H1 (cell line): ENCODE measurements at regions of chr1 and their contacts with region 1.

Region 1: DNA sequence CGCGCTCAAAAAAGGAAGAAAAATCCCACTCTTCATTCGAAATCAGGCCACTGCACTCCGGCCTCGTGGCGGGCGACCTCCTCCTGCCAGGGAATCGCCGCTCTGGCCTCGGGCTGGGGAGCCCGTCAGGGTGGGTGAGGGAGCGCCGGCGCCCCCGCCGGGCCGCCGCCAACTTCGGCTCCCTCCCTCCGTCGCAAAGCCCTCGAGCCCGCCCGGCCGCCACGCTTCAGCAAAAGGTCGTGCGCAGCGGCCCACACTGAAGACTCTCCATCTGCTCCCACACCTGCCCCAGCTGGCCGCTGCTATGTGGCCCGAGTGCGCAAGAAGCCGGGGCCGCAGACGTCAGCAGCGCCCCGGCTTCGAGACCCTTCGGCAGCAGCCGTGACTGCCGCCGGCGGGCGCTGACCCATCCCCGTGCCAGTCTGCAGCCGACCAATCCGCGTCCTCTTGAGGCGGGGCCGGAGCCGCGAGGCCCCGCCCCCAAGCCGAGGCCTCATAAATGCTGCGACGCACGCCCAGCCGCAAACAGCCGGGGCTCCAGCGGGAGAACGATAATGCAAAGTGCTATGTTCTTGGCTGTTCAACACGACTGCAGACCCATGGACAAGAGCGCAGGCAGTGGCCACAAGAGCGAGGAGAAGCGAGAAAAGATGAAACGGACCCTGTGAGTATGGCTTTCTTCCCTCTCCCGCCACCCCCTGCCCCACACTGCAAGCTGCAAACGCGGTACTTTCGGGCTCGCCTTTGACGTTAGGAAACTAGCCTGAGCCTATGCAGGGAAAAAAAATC is at the start of gene RGS2:
- DNase-seq: peak; percentile 85 to 92
- H3K4me3 ChIP-seq: peak within 1 kb of the TSS; percentile 70 to 90 (median 82)
- H3K27ac ChIP-seq: peak within 1 kb of the TSS; percentile 61
- H3K4me1 ChIP-seq: peaks cover 0 to 7% (median 3%) of the 10 kb centered on the region in 4 experiments; a peak in 3 of 7 replicates
- H3K27me3 ChIP-seq: no peaks in the 10 kb centered on the region; a peak in 3 of 7 replicates
- CTCF ChIP-seq: peak in 1 of 3 experiments; percentile 3; a peak in 1 of 4 replicates
- EP300 ChIP-seq: no peak
- POLR2A ChIP-seq: peak; percentile 97 to 99
- RAD21 ChIP-seq: no peak; a peak in 1 of 4 replicates
- total RNA-seq, gene RGS2: 16.6 and 17.0 TPM in 2 replicates

Region 2: GRCh38 chr1:192797891-192798290 is 10.8 kb before region 1 on chr1:
- CTCF ChIA-PET with region 1: interaction called, 27 read pairs
- POLR2A ChIA-PET with region 1: interaction called, 17 read pairs
- DNase-seq: no peak
- H3K4me3 ChIP-seq: no peak overlapping the region
- H3K27ac ChIP-seq: no peak overlapping the region
- H3K4me1 ChIP-seq: peaks cover 3 to 10% (median 5%) of the 10 kb centered on the region in 4 experiments; a peak in 4 of 7 replicates
- H3K27me3 ChIP-seq: no peaks in the 10 kb centered on the region
- CTCF ChIP-seq: no peak
- EP300 ChIP-seq: no peak
- POLR2A ChIP-seq: no peak
- RAD21 ChIP-seq: no peak

Region 3: DNA sequence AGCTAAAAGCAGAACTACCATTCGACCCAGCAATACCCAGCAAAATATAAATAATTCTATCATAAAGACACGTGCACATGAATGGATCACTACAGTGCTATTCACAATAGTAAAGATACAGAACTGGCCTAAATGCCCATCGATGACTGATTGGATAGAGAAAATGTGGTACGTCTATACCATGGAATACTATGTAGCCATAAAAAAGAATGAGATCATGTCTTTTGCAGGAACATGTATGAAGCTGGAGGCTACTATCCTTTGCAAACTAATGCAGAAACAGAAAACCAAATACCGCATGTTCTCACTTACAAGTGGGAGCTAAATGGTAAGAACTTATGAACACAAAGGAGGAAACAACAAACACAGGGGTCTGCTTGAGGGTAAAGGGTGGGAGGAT is 197.1 kb after region 1 on chr1:
- CTCF ChIA-PET with region 1: interaction called, 13 read pairs
- POLR2A ChIA-PET with region 1: interaction called, 6 read pairs
- DNase-seq: no peak
- H3K4me3 ChIP-seq: no peak overlapping the region
- H3K27ac ChIP-seq: no peak overlapping the region
- H3K4me1 ChIP-seq: no peaks in the 10 kb centered on the region
- H3K27me3 ChIP-seq: no peaks in the 10 kb centered on the region
- CTCF ChIP-seq: no peak
- EP300 ChIP-seq: no peak
- POLR2A ChIP-seq: no peak
- RAD21 ChIP-seq: no peak

Region 4: GRCh38 chr1:193019442-193020026 is 210.8 kb after region 1 on chr1:
- CTCF ChIA-PET with region 1: interaction called, 43 read pairs
- POLR2A ChIA-PET with region 1: no interaction called
- DNase-seq: no peak
- H3K4me3 ChIP-seq: no peak overlapping the region
- H3K27ac ChIP-seq: no peak overlapping the region
- H3K4me1 ChIP-seq: no peaks in the 10 kb centered on the region
- H3K27me3 ChIP-seq: no peaks in the 10 kb centered on the region
- CTCF ChIP-seq: peak in 1 of 3 experiments; percentile 13; a peak in 1 of 4 replicates
- EP300 ChIP-seq: no peak
- POLR2A ChIP-seq: no peak
- RAD21 ChIP-seq: peak; percentile 64